A673 (cell line): ENCODE measurements at regions of chr12 and their contacts with region 1.

Region 1: DNA sequence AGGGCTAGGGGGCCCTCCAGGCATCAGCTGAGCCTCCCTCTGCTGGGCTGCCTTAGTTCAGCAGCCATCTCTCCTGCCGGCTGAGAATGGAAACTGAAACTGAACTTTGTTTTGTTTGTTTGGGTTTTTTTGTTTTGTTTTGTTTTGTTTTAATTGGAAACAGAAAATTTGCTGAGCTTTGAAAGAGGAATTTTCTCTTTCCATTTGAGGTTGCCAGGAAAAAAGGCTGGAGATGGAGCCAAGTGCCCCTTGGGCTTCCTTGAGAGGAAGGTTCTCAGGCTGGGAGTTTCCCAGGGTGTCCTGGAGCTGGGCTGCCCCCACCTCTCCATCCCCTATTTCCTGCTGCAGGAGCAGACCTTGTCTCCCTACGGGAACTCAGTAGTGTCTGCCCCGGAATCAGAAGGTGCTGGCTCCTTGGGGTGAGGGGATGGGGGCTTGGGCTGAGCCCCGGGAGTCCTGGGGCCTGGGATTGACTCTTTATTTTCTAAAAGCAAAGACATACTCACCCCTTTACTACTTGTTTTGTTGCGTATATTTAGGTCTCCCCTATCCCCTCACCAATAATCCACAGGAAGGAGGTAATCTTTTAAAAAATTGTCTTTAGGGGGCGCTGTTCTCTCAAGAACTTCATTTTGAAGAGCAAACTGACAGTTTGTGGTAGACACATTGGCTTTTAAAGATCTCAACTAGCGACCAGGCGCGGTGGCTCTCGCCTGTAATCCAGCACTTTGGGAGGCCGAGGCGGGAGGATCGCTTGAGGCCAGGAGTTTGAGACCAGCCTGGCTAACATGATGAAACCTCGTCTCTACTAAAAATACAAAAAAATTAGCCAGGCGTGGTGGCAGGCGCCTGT is 21.3 kb upstream of the OASL start:
- DNase-seq: peak; percentile 80
- H3K4me3 ChIP-seq: peak overlapping the region; percentile 27
- H3K27ac ChIP-seq: no peak overlapping the region
- H3K4me1 ChIP-seq: no peaks in the 10 kb centered on the region
- H3K27me3 ChIP-seq: no peaks in the 10 kb centered on the region
- CTCF ChIP-seq: peak; percentile 61

Region 2: DNA sequence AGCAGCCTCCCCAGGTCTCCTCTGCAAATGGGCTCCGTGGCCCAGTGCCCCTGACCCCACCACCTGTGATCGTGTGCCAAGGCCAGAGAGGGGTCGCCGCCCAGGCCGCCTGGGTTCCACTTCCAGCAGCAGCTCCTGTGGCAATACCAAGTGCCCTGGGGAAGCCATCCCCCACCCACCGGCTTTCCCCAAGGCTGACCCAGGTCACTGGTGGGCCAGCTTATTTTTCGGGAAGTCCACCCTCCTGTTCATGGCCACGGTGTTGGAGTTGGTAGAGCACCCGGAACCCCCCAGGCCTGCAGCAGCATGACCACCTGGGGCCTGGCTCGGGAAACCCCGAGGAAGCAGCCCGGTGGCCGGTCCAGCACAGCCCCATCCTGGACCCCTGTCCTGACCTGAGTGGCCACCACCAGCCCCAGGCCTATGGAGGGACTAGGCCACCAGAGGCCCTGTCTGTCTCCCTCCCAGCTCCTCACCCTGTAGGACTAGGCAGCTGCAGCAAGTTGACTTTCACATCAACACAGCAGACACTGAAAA is 19.4 kb after region 1 on chr12:
- CTCF ChIA-PET with region 1: interaction called, 17 read pairs
- POLR2A ChIA-PET with region 1: no interaction called
- intact Hi-C with region 1: no loop called
- DNase-seq: no peak
- H3K4me3 ChIP-seq: no peak overlapping the region
- H3K27ac ChIP-seq: no peak overlapping the region
- H3K4me1 ChIP-seq: no peaks in the 10 kb centered on the region
- H3K27me3 ChIP-seq: no peaks in the 10 kb centered on the region
- CTCF ChIP-seq: no peak

Region 3: GRCh38 chr12:121443193-121443870 is 383.0 kb after region 1 on chr12:
- CTCF ChIA-PET with region 1: no interaction called
- POLR2A ChIA-PET with region 1: no interaction called
- intact Hi-C with region 1: loop called (anchors 5 kb)
- DNase-seq: peak; percentile 81
- H3K4me3 ChIP-seq: no peak overlapping the region
- H3K27ac ChIP-seq: no peak overlapping the region
- H3K4me1 ChIP-seq: no peaks in the 10 kb centered on the region
- H3K27me3 ChIP-seq: no peaks in the 10 kb centered on the region
- CTCF ChIP-seq: peak; percentile 94